Endothelial cell of umbilical vein (primary cell): ENCODE measurements at regions of chr4 and their contacts with region 1.

Region 1: DNA sequence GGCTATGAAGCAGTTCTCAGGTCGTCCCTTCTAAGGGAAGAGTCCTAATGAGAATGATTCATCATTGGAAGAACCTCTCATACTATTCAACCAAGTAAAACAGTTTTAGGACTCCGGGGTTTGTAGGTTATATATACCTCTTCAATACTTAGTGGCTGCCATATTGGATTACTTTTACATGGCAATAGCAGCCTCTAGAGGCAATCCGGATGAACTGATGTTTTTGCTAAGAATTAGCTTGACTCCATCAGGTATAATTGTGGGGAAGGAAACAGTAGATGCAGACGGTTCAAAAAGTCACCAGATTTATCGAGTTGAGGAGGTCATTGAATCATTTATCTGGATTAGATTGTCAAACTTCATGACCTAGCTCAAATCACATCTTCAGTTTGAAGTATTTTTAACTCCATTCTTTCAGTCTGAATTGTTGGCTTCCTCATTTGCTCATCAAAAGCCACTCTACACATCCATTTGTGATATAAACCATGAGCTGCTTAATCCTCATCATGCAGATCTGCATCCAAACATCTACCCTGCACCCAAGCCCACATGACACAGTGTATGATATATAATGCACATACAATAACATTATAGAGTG is 28.4 kb downstream of the GUCY1B1 start:
- DNase-seq: peak; percentile 75
- H3K4me3 ChIP-seq: no peak overlapping the region
- H3K27ac ChIP-seq: no peak overlapping the region
- H3K4me1 ChIP-seq: no peaks in the 10 kb centered on the region
- H3K27me3 ChIP-seq: no peaks in the 10 kb centered on the region
- CTCF ChIP-seq: peak; percentile 64 to 67
- POLR2A ChIP-seq: no peak

Region 2: DNA sequence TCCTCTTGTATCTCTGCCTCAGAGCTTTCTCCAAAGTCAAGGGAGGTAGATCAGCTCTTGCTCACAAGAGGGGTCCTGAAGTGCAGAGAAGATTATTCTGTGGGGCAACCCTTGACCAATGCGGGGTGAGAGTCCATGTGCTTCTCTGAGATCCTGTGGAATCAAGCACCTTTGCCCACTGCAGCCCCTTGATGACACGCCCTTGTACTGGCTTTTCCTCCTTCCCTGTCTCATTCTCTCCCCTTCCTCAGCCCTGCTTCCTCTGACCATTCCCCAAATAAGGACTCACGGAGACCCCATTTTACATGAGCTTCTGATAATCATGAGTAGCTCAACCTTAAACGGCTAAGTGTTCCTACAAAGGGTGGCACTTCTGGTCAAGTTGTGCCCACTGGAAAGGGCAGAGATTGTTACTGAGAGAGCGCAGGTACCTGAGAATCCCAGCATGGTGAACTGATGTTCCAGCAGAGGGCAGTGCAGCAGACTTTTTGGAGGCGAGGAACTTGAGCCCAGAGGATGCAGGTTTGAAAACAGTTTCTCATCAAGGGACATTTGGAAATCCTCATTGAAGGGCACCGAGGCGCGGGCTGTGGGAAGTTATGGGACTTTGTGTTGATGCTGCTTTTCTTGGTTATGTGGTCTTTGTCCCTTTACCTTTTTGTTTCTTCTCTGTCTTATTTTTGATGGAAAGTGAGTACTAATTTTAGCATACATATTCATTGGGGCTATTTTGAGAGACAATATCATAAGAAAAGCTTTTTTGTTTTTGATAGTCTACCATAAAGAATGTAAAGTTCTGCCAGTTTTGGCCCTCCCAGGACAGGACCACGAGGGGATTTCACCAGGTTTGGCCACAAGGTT is 804.8 kb before region 1 on chr4:
- CTCF ChIA-PET with region 1: interaction called, 3 read pairs
- POLR2A ChIA-PET with region 1: no interaction called
- dilution Hi-C with region 1: no loop called
- intact Hi-C with region 1: loop called (anchors 2 kb)
- DNase-seq: peak; percentile 61
- H3K4me3 ChIP-seq: no peak overlapping the region
- H3K27ac ChIP-seq: no peak overlapping the region
- H3K4me1 ChIP-seq: no peaks in the 10 kb centered on the region
- H3K27me3 ChIP-seq: peaks cover 0 to 4% of the 10 kb centered on the region in 2 experiments
- CTCF ChIP-seq: peak; percentile 64
- POLR2A ChIP-seq: no peak

Region 3: DNA sequence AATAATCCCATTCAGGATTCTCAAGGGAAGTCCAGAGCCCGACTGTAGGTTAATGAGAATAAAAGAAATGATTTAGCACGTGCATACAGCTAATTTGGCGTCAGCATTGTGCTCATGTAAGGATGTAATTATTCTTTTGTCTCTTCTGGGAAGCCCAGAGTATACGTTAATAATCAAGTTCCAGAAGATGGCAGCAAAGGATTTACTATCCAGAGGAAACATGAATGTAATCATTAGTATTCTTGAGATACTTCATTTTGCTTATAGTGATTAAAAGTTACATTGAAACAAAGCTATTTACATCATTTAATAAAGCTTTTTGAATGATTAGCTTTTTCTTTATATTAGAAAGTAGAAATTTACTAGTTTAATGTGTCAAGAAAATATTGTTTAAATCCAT is 383.3 kb before region 1 on chr4:
- CTCF ChIA-PET with region 1: interaction called, 77 read pairs
- POLR2A ChIA-PET with region 1: no interaction called
- dilution Hi-C with region 1: no loop called
- intact Hi-C with region 1: loop called (anchors 1 kb)
- DNase-seq: peak; percentile 67
- H3K4me3 ChIP-seq: no peak overlapping the region
- H3K27ac ChIP-seq: no peak overlapping the region
- H3K4me1 ChIP-seq: no peaks in the 10 kb centered on the region
- H3K27me3 ChIP-seq: peaks cover 2 to 4% of the 10 kb centered on the region in 2 experiments
- CTCF ChIP-seq: peak; percentile 6 to 22
- POLR2A ChIP-seq: no peak

Region 4: DNA sequence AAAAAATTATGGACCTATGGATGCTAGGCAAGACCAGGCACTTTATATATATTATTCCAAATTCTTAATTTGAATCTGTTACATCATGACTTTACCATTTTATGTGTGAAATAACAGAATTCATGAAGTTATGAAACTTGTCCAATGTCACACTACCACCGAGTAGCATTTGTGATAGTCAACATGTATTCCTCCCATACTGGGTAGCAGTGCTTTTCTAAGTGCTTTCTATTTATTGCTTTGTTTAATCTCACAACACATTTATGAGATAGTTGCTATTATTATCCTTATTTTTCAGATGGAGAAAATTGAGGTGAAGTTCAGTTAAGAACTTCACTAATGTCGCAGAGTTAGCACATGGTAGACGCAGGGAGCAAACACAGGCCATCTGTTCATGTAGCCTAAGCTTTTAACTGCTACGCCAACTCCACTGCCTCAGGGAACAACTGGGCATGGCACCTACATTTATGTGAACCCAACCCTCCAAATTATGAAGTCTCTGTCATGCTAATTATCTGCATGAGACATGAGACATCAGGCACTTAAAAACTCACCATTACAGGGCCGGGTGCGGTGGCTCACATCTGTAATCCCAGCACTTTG is 99.7 kb before region 1 on chr4:
- CTCF ChIA-PET with region 1: no interaction called
- POLR2A ChIA-PET with region 1: no interaction called
- dilution Hi-C with region 1: no loop called
- intact Hi-C with region 1: no loop called
- DNase-seq: no peak
- H3K4me3 ChIP-seq: no peak overlapping the region
- H3K27ac ChIP-seq: no peak overlapping the region
- H3K4me1 ChIP-seq: no peaks in the 10 kb centered on the region
- H3K27me3 ChIP-seq: no peaks in the 10 kb centered on the region
- CTCF ChIP-seq: no peak
- POLR2A ChIP-seq: no peak

Region 5: GRCh38 chr4:155769090-155769489 is 18.1 kb before region 1 on chr4:
- CTCF ChIA-PET with region 1: interaction called, 11 read pairs
- POLR2A ChIA-PET with region 1: no interaction called
- dilution Hi-C with region 1: no loop called
- intact Hi-C with region 1: no loop called
- DNase-seq: no peak
- H3K4me3 ChIP-seq: no peak overlapping the region
- H3K27ac ChIP-seq: no peak overlapping the region
- H3K4me1 ChIP-seq: no peaks in the 10 kb centered on the region
- H3K27me3 ChIP-seq: no peaks in the 10 kb centered on the region
- CTCF ChIP-seq: no peak
- POLR2A ChIP-seq: no peak

Region 6: GRCh38 chr4:155878611-155879010 is 91.4 kb after region 1 on chr4:
- CTCF ChIA-PET with region 1: no interaction called
- POLR2A ChIA-PET with region 1: no interaction called
- dilution Hi-C with region 1: no loop called
- intact Hi-C with region 1: no loop called
- DNase-seq: no peak
- H3K4me3 ChIP-seq: no peak overlapping the region
- H3K27ac ChIP-seq: no peak overlapping the region
- H3K4me1 ChIP-seq: no peaks in the 10 kb centered on the region
- H3K27me3 ChIP-seq: no peaks in the 10 kb centered on the region
- CTCF ChIP-seq: no peak
- POLR2A ChIP-seq: no peak

Region 7: GRCh38 chr4:155900381-155900780 is 113.2 kb after region 1 on chr4:
- CTCF ChIA-PET with region 1: no interaction called
- POLR2A ChIA-PET with region 1: no interaction called
- dilution Hi-C with region 1: no loop called
- intact Hi-C with region 1: no loop called
- DNase-seq: no peak
- H3K4me3 ChIP-seq: no peak overlapping the region
- H3K27ac ChIP-seq: no peak overlapping the region
- H3K4me1 ChIP-seq: no peaks in the 10 kb centered on the region
- H3K27me3 ChIP-seq: no peaks in the 10 kb centered on the region
- CTCF ChIP-seq: no peak
- POLR2A ChIP-seq: no peak

Region 8: GRCh38 chr4:155953151-155954114 is 166.2 kb after region 1 on chr4 and contains the start of gene CTSO:
- CTCF ChIA-PET with region 1: interaction called, 30 read pairs
- POLR2A ChIA-PET with region 1: no interaction called
- dilution Hi-C with region 1: no loop called
- intact Hi-C with region 1: no loop called
- DNase-seq: peak; percentile 88
- H3K4me3 ChIP-seq: peak within 1 kb of the TSS; percentile 54 to 86 (median 79)
- H3K27ac ChIP-seq: peak within 1 kb of the TSS; percentile 92
- H3K4me1 ChIP-seq: peaks cover 6% of the 10 kb centered on the region
- H3K27me3 ChIP-seq: no peaks in the 10 kb centered on the region
- CTCF ChIP-seq: peak in 1 of 2 donors; percentile 58
- POLR2A ChIP-seq: peak; percentile 83
- total RNA-seq, gene CTSO: 6.7 and 7.9 TPM in 2 replicates